ENCODE measurements at regions of chr9 and their contacts with region 1.

Region 1: DNA sequence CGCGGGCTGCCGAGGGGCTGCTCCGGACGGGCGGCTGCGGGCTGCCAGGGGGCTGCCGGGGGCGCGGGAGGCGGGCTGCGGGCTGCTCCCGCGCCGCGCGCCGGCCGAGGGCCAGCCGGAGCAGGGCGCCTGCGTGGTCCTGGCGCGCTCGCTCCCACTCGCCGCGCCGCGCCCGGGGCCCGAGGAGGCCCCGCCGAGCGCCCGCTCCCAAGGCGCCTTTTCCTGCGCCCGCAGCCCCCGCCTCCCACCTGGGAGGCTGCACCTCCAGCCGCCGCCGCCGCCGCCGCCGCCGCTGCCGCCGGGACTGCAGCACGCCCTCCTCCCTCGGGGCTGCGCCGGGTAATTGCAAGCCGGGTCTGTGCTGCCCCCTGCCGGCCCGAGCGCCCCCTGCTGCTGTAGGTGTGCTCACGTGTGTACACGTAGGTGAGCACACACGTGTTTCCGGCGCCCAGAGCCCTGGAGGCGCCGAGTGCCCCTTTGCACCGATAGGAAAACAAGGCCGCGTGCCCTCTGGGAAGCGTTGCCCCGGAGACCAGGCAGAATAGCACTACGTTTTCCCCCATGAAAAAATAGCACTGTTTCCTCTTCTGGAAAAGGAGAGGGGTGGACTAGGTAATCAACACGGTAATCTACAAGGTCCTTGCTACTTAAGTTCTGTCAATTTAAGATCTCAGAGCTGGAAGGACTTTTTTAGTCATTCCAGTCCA is at the start of gene EPB41L4B:
- DNase-seq: peak; percentile 81 to 95
- H3K4me3 ChIP-seq: peak within 1 kb of the TSS; percentile 60
- H3K27ac ChIP-seq: peak within 1 kb of the TSS; percentile 44
- H3K4me1 ChIP-seq: peaks cover 39% of the 10 kb centered on the region
- H3K27me3 ChIP-seq: no peaks in the 10 kb centered on the region
- CTCF ChIP-seq: peak; percentile 91
- total RNA-seq, gene EPB41L4B: 4.2 and 5.0 TPM in 2 replicates

Region 2: DNA sequence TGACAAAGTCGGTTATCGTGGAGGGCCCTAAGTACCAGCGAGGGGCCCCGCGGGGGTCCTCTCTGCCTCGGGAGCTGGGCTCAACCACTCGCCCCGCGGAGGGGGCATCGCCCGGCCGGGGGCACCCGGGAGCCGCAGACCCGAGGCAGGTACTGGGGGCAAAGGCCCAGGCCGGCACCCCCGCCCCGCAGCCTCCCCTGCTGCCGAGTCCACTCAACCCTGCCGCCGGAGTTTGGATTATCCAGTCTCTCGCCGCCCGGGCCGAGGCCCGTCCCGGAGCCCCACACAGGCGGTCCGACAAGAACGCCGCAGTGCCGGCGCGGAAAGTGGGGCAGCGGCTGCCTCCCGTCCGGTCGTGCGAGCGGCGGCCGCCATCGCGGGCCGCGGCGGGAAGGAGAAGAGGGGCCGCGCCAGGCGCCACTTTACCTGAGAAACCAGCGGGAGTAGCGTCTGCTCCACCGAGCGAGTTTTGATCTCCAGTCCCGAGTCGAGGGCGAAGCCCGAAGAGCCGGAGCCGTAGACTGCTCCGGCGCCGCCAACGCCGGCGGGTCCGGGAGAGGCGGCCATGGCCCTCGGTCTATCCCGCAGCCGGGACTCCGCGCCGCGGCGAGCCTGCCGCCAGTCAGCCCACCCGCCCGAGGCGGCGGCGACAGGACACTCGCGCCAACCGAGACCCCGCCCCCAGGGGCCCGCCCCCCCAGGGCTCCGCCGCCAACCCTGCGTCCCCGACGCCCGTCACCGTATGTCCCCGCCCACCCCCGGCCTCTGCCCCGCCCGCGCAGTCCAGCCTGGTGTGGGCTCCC is 307.8 kb before region 1 on chr9 and contains the start of gene CTNNAL1:
- CTCF ChIA-PET with region 1: no interaction called
- POLR2A ChIA-PET with region 1: interaction called, 4 read pairs
- intact Hi-C with region 1: loop called (anchors 5 kb)
- DNase-seq: peak; percentile 49 to 95
- H3K4me3 ChIP-seq: peak within 1 kb of the TSS; percentile 72
- H3K27ac ChIP-seq: peak within 1 kb of the TSS; percentile 77
- H3K4me1 ChIP-seq: peaks cover 74% of the 10 kb centered on the region
- H3K27me3 ChIP-seq: no peaks in the 10 kb centered on the region
- CTCF ChIP-seq: no peak
- total RNA-seq, gene CTNNAL1: 57.7 and 71.3 TPM in 2 replicates

Region 3: GRCh38 chr9:109098171-109098959 is 222.5 kb before region 1 on chr9:
- CTCF ChIA-PET with region 1: no interaction called
- POLR2A ChIA-PET with region 1: interaction called, 3 read pairs
- intact Hi-C with region 1: loop called (anchors 2 kb)
- DNase-seq: peak; percentile 48 to 75
- H3K4me3 ChIP-seq: peak overlapping the region; percentile 9; the same call in 1 of the 2 replicates
- H3K27ac ChIP-seq: peak overlapping the region; percentile 93
- H3K4me1 ChIP-seq: peaks cover 68% of the 10 kb centered on the region
- H3K27me3 ChIP-seq: no peaks in the 10 kb centered on the region
- CTCF ChIP-seq: peak; percentile 36; the same call in 1 of the 2 replicates

Region 4: DNA sequence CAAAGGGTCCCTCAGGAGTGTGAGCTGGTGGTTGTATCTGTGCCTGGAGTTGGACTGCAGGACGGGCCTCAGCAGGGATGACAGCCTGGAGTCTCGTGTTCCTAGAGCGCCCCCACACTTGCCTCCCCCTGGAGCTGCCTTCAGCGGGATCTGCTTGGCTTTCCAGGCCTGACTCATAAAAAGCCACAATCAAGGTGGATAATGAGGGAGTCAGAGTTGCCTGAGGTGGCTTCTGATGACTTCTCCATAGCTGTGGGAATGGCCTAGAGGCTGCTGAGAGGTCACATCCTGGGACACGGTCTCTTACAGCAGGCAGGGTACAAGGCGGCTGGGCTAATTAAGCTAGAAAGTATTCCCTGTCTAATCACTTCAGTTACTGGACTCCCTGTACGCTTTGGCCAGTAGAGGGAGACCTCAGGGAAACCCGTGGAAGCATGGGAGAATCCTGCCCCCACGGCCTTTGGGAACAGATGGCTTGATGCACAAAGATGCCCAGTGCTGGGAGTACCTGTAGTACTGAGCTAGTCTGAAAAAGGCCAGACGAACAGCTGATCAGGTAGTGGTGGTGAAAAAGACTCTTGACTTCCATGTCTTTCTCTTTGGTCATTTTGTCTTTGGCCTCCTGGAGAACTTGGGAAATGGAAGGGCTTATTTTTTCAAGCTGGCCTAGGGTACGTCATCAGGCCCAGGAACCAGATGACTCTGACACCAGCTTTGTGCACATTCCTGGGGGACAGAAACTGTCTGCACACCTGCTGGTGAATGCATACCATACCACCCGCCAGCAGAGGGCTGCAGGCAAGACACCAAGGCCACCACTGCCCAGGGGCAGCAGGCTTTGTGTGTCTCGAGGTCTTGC is 137.7 kb before region 1 on chr9:
- CTCF ChIA-PET with region 1: no interaction called
- POLR2A ChIA-PET with region 1: no interaction called
- intact Hi-C with region 1: loop called (anchors 5 kb)
- DNase-seq: peak; percentile 47 to 54
- H3K4me3 ChIP-seq: no peak overlapping the region
- H3K27ac ChIP-seq: no peak overlapping the region
- H3K4me1 ChIP-seq: no peaks in the 10 kb centered on the region
- H3K27me3 ChIP-seq: no peaks in the 10 kb centered on the region
- CTCF ChIP-seq: peak; percentile 75

Region 5: GRCh38 chr9:109274884-109275730 is 45.8 kb before region 1 on chr9:
- CTCF ChIA-PET with region 1: no interaction called
- POLR2A ChIA-PET with region 1: no interaction called
- intact Hi-C with region 1: no loop called
- DNase-seq: no peak
- H3K4me3 ChIP-seq: no peak overlapping the region
- H3K27ac ChIP-seq: no peak overlapping the region
- H3K4me1 ChIP-seq: no peaks in the 10 kb centered on the region
- H3K27me3 ChIP-seq: no peaks in the 10 kb centered on the region
- CTCF ChIP-seq: no peak

Region 6: DNA sequence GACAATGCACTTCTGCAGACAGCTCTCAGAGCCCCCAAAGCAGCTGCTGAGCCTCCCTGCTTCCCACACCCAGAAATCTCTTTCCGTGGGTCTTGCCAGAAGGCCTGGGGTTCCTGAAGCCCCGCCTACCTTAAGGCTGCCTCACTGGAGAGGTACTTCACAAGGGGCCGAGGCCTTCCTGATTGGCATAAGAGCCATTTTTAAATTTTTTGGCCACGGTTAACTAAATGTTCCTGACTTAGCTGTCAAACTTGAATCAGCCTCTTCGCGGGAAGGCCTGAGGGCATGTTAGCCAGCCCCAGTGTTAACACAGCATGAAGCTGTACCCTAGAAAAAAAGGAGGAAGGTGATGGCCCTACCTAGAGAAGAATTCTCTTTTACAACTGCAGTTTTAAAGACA is 20.7 kb after region 1 on chr9:
- CTCF ChIA-PET with region 1: interaction called, 11 read pairs
- POLR2A ChIA-PET with region 1: interaction called, 7 read pairs
- intact Hi-C with region 1: loop called (anchors 1 kb)
- DNase-seq: peak; percentile 55 to 73
- H3K4me3 ChIP-seq: no peak overlapping the region
- H3K27ac ChIP-seq: 0 out of 2 replicates have a peak overlapping the region, but pooled peaks have one; percentile 18
- H3K4me1 ChIP-seq: peaks cover 34% of the 10 kb centered on the region
- H3K27me3 ChIP-seq: no peaks in the 10 kb centered on the region
- CTCF ChIP-seq: no peak

Measured in PC-9 (cell line).